ENCODE measurements at regions of chr12 and their contacts with region 1.

Region 1: DNA sequence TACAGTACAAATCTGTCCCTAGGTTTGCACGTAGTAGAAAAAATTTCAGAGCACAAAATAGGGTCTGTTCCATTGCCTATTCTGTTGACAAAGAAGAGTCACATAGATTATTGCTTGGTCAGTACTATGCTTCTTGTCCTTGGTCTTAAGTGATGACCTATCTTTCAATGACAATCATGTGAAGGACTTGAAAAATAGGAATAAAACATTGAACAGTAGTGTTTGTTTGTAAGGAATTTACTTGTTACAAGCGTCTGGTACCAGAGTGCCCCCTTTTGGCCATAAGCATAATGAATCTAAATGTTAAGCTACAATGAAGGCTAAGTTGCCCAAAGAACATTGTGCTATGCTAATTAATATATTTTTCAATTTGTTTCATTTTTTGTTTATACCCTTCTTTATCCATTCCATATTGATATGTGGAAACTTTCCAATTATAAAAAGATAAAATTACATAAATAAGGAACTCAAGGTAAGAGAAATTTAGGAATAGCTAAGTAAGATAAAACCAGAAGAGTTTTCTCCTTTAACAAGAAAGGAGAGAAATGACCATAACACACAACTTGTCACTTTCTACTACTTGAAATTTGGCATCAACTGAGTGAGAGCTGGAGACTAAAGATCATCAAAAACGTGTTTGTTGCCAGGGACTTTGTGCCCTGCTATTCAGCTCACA is 204.7 kb downstream of the EPS8 start:
- DNase-seq: peak in 1 of 2 donors; percentile 84
- ATAC-seq: no peak
- H3K4me3 ChIP-seq: no peak overlapping the region
- H3K4me3 Mint-ChIP-seq: no peak overlapping the region
- H3K27ac ChIP-seq: no peak overlapping the region
- H3K27ac Mint-ChIP-seq: no peak overlapping the region
- H3K4me1 ChIP-seq: no peaks in the 10 kb centered on the region
- H3K4me1 Mint-ChIP-seq: no peaks in the 10 kb centered on the region
- H3K27me3 ChIP-seq: peaks cover under 1% of the 10 kb centered on the region
- H3K27me3 Mint-ChIP-seq: peaks cover 0 to 2% of the 10 kb centered on the region in 2 donors
- CTCF ChIP-seq: peak; percentile 42

Region 2: DNA sequence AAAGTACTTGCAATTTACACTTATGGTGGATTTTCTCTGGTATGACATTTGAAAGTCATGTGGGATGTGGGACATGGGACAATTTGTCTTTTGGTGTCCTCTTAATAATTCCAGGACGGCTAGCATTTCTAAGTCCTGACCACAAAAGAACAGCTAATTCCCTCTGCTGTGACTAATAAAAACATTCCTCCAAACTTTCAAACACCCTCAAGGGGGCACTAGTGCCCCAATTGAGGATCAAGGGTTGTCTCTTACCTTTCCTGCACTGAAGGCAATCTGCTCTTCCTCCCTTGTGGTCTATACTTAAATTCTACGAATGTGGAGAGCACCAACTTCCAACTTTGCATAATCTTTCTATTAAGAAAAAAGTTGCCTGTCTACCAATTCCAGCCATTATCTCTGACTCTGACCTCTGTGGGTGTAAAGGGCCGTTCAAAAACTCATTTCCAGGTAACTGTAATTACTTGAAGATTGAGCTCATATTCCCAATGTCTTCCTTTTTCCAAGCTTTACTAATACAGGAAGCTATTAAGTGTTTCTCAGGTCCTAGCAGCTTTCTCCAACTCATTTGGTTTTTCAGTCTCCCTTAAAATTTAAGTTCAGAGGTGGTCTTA is 52.0 kb before region 1 on chr12:
- intact Hi-C with region 1: loop called (anchors 1 kb)
- DNase-seq: peak in 1 of 2 donors; percentile 79
- ATAC-seq: peak in 1 of 3 donors; percentile 52
- H3K4me3 ChIP-seq: no peak overlapping the region
- H3K4me3 Mint-ChIP-seq: no peak overlapping the region
- H3K27ac ChIP-seq: no peak overlapping the region
- H3K27ac Mint-ChIP-seq: no peak overlapping the region
- H3K4me1 ChIP-seq: no peaks in the 10 kb centered on the region
- H3K4me1 Mint-ChIP-seq: peaks cover 0 to 4% of the 10 kb centered on the region in 2 donors
- H3K27me3 ChIP-seq: no peaks in the 10 kb centered on the region
- H3K27me3 Mint-ChIP-seq: peaks cover 3 to 5% of the 10 kb centered on the region in 2 donors
- CTCF ChIP-seq: peak; percentile 19